GM18951 (cell line): ENCODE measurements at regions of chr7 and their contacts with region 1.

Region 1: GRCh38 chr7:150410680-150411346 is 31.7 kb downstream of the ZNF775 start:
- POLR2A ChIP-seq: no peak

Region 2: GRCh38 chr7:150363872-150364271 is 46.9 kb before region 1 on chr7:
- in situ Hi-C with region 1: loop called (anchors 5 kb)
- POLR2A ChIP-seq: no peak